ENCODE measurements at regions of chr1 and their contacts with region 1.

Region 1: DNA sequence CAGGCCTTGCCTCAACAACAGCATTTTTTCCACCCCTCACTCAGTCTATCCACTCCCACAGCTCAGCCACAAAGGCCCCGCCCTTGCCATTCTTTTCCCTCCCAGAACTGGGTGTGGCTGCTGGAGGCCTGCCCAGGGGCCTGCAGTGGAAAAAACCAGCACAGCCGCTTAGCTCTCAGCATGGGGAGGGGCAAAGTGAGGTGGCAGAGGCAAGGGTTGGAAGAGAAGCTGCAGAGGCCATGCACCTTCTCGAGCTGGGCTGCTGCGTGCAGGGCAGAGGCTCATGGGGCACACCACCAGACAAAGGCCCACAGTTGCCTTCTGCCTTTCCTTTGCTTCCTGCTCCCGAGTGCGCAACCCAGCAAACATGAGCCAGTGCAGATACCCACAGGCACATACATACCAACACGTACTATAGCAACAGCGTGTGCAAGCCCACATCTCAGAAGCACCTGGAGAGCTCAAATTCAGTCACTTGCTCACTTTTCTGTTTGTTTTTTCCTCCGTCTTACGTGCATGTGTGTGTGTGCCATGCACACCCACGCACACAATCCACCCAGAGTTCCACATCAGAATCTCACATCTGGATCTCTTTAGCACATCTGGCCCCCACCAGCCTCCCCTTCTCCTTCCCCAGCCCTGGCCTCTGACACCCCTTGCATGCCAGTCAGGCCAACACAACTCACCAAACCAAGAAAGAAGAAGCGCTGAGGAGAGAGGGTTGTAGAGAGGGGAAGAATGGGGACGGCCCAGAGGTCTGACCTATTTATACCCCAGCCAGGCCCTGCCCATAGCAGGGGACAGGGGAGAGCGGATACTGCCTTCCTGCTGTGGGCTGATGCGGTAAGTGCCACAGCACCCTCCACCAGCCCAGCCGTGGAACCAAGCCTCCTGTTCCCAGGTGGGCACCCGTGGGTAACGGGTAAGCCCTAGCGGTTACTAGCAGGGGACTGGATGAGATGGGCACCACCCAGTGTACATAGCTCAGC is at the start of gene S100A4:
- DNase-seq: peak; percentile 55
- ATAC-seq: peak; percentile 77
- H3K4me3 ChIP-seq: peak within 1 kb of the TSS; percentile 33 to 80 (median 49)
- H3K4me3 Mint-ChIP-seq: peak within 1 kb of the TSS; percentile 90
- H3K27ac ChIP-seq: peak within 1 kb of the TSS; percentile 70 to 82
- H3K27ac Mint-ChIP-seq: peak within 1 kb of the TSS; percentile 96
- H3K4me1 ChIP-seq: peaks cover 36 to 42% of the 10 kb centered on the region in 2 donors
- H3K4me1 Mint-ChIP-seq: peaks cover 53% of the 10 kb centered on the region
- H3K27me3 ChIP-seq: peaks cover 0 to 5% (median 0%) of the 10 kb centered on the region in 4 experiments
- H3K27me3 Mint-ChIP-seq: no peaks in the 10 kb centered on the region
- CTCF ChIP-seq: no peak
- total RNA-seq, gene S100A4: 58.0 and 62.7 TPM in 2 replicates

Region 2: GRCh38 chr1:153532769-153533599 is 12.4 kb before region 1 on chr1:
- CTCF ChIA-PET with region 1: interaction called, 59 read pairs
- POLR2A ChIA-PET with region 1: interaction called, 20 read pairs
- intact Hi-C with region 1: loop called (anchors 1 kb)
- DNase-seq: peak; percentile 73
- ATAC-seq: peak; percentile 13
- H3K4me3 ChIP-seq: no peak overlapping the region
- H3K4me3 Mint-ChIP-seq: peak overlapping the region; percentile 47
- H3K27ac ChIP-seq: peak overlapping the region; percentile 2 to 26
- H3K27ac Mint-ChIP-seq: peak overlapping the region; percentile 50
- H3K4me1 ChIP-seq: peaks cover 38 to 48% of the 10 kb centered on the region in 2 donors
- H3K4me1 Mint-ChIP-seq: peaks cover 41% of the 10 kb centered on the region
- H3K27me3 ChIP-seq: no peaks in the 10 kb centered on the region
- H3K27me3 Mint-ChIP-seq: no peaks in the 10 kb centered on the region
- CTCF ChIP-seq: peak; percentile 71

Region 3: DNA sequence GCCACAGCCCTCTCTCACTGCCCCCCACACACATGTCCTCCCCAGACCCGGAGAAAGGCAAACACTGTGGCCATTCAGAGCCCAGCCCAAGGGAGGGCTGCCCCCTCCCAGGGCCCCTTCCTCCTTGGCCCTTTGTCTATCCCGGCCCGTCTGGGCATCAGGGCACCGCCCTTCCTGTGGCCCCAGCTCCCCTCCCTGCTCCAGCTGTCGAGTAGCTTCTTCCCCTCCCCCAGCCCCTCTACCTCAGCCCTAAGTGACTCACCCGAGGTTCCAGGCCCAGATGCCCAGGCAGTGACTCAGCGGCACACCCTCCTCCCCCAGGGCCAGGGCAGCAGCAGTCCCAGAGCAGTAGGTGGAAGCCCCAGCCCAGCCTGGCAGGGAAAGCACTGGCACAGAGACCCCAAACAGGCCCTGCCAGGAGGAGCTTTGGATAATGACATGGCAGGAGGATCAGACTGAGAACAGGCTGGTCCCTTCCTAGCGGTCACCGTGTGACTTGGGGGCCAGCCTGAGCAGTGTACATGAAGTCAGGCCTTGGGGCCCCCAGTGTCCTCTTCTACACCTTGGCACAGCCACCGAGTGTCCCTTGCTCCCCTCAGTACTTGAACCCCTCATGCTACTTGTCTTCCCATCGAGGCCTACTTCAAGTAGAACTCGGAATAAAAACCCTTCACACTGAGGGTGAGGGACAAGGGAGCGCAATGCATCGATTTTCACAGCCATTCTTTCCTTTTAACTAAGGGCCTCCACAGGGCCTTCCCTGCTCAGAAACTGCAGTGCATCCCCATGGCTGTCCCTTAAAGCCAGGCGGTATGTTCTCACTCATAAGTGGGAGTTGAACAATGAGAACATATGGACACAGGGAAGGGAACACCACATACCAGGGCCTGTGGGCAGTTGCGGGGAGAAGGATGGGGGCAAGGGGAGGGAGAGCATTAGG is 21.3 kb after region 1 on chr1:
- CTCF ChIA-PET with region 1: interaction called, 189 read pairs
- POLR2A ChIA-PET with region 1: interaction called, 6 read pairs
- intact Hi-C with region 1: loop called (anchors 2 kb)
- DNase-seq: peak; percentile 50
- ATAC-seq: peak; percentile 80
- H3K4me3 ChIP-seq: no peak overlapping the region
- H3K4me3 Mint-ChIP-seq: peak overlapping the region; percentile 55
- H3K27ac ChIP-seq: peak overlapping the region; percentile 49 to 63
- H3K27ac Mint-ChIP-seq: peak overlapping the region; percentile 85
- H3K4me1 ChIP-seq: peaks cover 12 to 28% of the 10 kb centered on the region in 2 donors
- H3K4me1 Mint-ChIP-seq: peaks cover 30% of the 10 kb centered on the region
- H3K27me3 ChIP-seq: peaks cover 0 to 2% (median 0%) of the 10 kb centered on the region in 4 experiments
- H3K27me3 Mint-ChIP-seq: peaks cover 7% of the 10 kb centered on the region
- CTCF ChIP-seq: no peak

Region 4: DNA sequence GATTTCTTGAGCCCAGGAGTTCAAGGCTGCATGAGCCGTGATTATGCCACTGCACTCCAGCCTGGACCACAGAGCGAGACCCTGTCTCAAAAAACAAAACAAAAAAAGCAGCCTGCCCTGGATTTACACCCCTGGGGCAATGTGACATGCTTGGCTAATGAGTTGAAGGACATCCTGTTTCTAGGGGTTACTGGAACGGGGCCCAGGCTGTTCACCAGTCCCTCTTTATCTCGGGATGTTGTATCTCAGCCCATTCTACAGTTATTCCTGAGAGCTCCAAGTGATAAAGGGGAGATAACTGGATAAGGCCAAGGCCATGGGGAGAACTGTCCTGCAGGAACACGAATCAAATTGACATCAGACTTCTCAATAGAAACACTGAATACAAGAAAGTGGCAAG is 42.0 kb after region 1 on chr1:
- CTCF ChIA-PET with region 1: no interaction called
- POLR2A ChIA-PET with region 1: no interaction called
- intact Hi-C with region 1: no loop called
- DNase-seq: no peak
- ATAC-seq: no peak
- H3K4me3 ChIP-seq: no peak overlapping the region
- H3K4me3 Mint-ChIP-seq: no peak overlapping the region
- H3K27ac ChIP-seq: no peak overlapping the region
- H3K27ac Mint-ChIP-seq: no peak overlapping the region
- H3K4me1 ChIP-seq: no peaks in the 10 kb centered on the region
- H3K4me1 Mint-ChIP-seq: no peaks in the 10 kb centered on the region
- H3K27me3 ChIP-seq: no peaks in the 10 kb centered on the region
- H3K27me3 Mint-ChIP-seq: peaks cover 10% of the 10 kb centered on the region
- CTCF ChIP-seq: no peak

Region 5: GRCh38 chr1:153677718-153678505 is 132.6 kb after region 1 on chr1:
- CTCF ChIA-PET with region 1: no interaction called
- POLR2A ChIA-PET with region 1: interaction called, 13 read pairs
- intact Hi-C with region 1: no loop called
- DNase-seq: peak; percentile 73
- ATAC-seq: peak; percentile 77
- H3K4me3 ChIP-seq: peak overlapping the region in 4 of 5 experiments; percentile 28 to 57 (median 50)
- H3K4me3 Mint-ChIP-seq: peak overlapping the region; percentile 94
- H3K27ac ChIP-seq: no peak overlapping the region
- H3K27ac Mint-ChIP-seq: peak overlapping the region; percentile 5
- H3K4me1 ChIP-seq: peaks cover 26 to 30% of the 10 kb centered on the region in 2 donors
- H3K4me1 Mint-ChIP-seq: peaks cover 26% of the 10 kb centered on the region
- H3K27me3 ChIP-seq: peaks cover 0 to 37% (median 24%) of the 10 kb centered on the region in 4 experiments
- H3K27me3 Mint-ChIP-seq: peaks cover 49% of the 10 kb centered on the region
- CTCF ChIP-seq: peak; percentile 88

Measured in B cell (primary cell).